Naive thymus-derived CD4-positive, alpha-beta T cell (primary cell): ENCODE measurements at regions of chr4 and their contacts with region 1.

Region 1: GRCh38 chr4:114386637-114387233 is 211.9 kb upstream of the UGT8 start:
- DNase-seq: peak in 2 of 9 donors; percentile 10 to 11
- ATAC-seq: no peak
- H3K4me3 ChIP-seq: no peak overlapping the region
- H3K4me3 Mint-ChIP-seq: no peak overlapping the region
- H3K27ac ChIP-seq: no peak overlapping the region
- H3K27ac Mint-ChIP-seq: no peak overlapping the region
- H3K4me1 ChIP-seq: no peaks in the 10 kb centered on the region
- H3K4me1 Mint-ChIP-seq: peaks cover 0 to 2% (median 0%) of the 10 kb centered on the region in 7 donors
- H3K27me3 ChIP-seq: no peaks in the 10 kb centered on the region
- H3K27me3 Mint-ChIP-seq: peaks cover 0 to 17% (median 14%) of the 10 kb centered on the region in 5 donors

Region 2: DNA sequence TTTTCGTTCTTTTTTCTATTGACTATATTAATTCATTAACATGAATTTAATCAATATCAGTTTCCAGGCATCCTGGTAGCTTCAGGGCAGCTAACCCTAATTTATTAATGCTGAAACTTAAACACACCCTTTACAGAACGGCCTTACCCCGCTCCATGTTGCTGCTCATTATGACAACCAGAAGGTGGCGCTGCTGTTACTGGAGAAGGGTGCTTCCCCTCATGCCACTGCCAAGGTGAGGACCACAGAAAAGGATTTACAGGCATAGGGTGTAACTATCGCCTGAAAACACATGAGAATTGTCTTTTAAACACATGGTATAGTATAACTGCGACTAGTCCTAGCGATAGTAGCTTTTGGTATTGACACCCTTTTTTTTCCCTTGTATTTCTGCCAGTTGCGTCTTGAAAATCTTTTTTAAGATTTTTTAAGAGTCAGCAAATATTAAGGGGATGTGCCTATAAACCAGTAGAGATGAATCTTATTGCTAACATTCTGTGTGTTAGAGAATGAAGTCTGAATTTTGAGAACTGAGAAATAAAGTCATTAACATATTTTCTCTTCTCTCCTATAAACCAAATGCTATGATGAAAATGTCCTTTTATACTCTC is 1108.3 kb before region 1 on chr4:
- CTCF ChIA-PET with region 1: no interaction called
- POLR2A ChIA-PET with region 1: no interaction called
- intact Hi-C with region 1: loop called in 1 of 2 experiments (anchors 5 kb)
- DNase-seq: peak in 7 of 9 donors; percentile 2 to 45 (median 16)
- ATAC-seq: peak; percentile 60
- H3K4me3 ChIP-seq: no peak overlapping the region
- H3K4me3 Mint-ChIP-seq: no peak overlapping the region
- H3K27ac ChIP-seq: no peak overlapping the region
- H3K27ac Mint-ChIP-seq: no peak overlapping the region
- H3K4me1 ChIP-seq: no peaks in the 10 kb centered on the region
- H3K4me1 Mint-ChIP-seq: no peaks in the 10 kb centered on the region
- H3K27me3 ChIP-seq: peaks cover 0 to 4% of the 10 kb centered on the region in 2 donors
- H3K27me3 Mint-ChIP-seq: peaks cover 11 to 21% (median 15%) of the 10 kb centered on the region in 5 donors

Region 3: DNA sequence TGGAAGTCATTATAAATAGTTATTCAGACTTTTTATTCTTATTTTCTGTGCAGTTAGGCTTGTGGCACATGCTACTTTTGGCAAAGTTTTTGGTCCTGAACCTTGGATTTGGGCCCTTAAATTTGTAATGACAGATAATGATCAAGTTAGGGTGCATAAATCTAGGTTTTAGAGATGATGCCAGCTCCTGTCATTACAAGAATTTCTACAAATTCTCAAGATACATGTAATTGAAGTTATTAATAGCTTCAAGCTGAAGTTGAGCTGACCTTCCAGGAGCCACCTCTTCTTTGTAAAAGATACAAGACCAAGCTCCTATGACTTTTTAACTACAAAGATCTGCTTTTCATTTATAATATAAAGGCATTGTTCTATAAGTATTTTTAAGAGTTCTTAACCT is 43.7 kb before region 1 on chr4:
- CTCF ChIA-PET with region 1: no interaction called
- POLR2A ChIA-PET with region 1: no interaction called
- intact Hi-C with region 1: no loop called
- DNase-seq: no peak
- ATAC-seq: no peak
- H3K4me3 ChIP-seq: no peak overlapping the region
- H3K4me3 Mint-ChIP-seq: no peak overlapping the region
- H3K27ac ChIP-seq: no peak overlapping the region
- H3K27ac Mint-ChIP-seq: no peak overlapping the region
- H3K4me1 ChIP-seq: no peaks in the 10 kb centered on the region
- H3K4me1 Mint-ChIP-seq: no peaks in the 10 kb centered on the region
- H3K27me3 ChIP-seq: no peaks in the 10 kb centered on the region
- H3K27me3 Mint-ChIP-seq: peaks cover 0 to 15% (median 10%) of the 10 kb centered on the region in 5 donors

Region 4: DNA sequence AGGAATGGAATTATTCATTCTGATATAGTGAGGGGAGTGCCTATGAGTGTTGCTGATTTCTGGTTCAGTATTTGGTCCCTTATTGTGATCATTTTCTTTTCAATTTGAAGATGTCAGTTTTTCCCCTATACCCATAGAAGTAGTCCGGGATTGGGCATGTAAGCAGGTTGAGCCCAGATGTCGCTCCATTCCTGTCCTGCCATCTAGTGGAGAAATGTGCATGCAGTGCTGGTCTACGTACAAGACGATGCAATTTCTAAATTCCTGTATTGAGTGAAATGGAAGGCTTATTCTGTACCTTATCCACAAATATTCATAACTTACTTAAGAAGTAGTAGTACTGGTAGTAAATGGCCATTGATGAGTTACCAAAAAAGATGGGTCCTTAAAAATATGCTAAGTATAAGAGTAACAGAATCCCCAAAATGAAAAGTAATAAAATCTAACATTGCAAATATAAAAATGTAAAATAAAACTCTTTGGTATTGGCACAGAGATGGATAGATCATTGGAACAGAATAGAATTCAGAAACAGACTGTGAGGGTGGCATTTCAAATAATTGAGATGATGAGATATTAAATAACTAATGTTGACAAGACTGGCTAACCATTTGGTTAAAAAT is 272.8 kb after region 1 on chr4:
- CTCF ChIA-PET with region 1: no interaction called
- POLR2A ChIA-PET with region 1: no interaction called
- intact Hi-C with region 1: loop called (anchors 1 kb)
- DNase-seq: peak in 6 of 9 donors; percentile 1 to 20 (median 10)
- ATAC-seq: peak; percentile 55
- H3K4me3 ChIP-seq: no peak overlapping the region
- H3K4me3 Mint-ChIP-seq: no peak overlapping the region
- H3K27ac ChIP-seq: no peak overlapping the region
- H3K27ac Mint-ChIP-seq: no peak overlapping the region
- H3K4me1 ChIP-seq: no peaks in the 10 kb centered on the region
- H3K4me1 Mint-ChIP-seq: no peaks in the 10 kb centered on the region
- H3K27me3 ChIP-seq: no peaks in the 10 kb centered on the region
- H3K27me3 Mint-ChIP-seq: peaks cover 5 to 30% (median 23%) of the 10 kb centered on the region in 5 donors

Region 5: GRCh38 chr4:114694770-114695169 is 308.0 kb after region 1 on chr4:
- CTCF ChIA-PET with region 1: no interaction called
- POLR2A ChIA-PET with region 1: no interaction called
- intact Hi-C with region 1: loop called (anchors 1 kb)
- DNase-seq: peak in 5 of 9 donors; percentile 1 to 17 (median 9)
- ATAC-seq: no peak
- H3K4me3 ChIP-seq: no peak overlapping the region
- H3K4me3 Mint-ChIP-seq: no peak overlapping the region
- H3K27ac ChIP-seq: no peak overlapping the region
- H3K27ac Mint-ChIP-seq: no peak overlapping the region
- H3K4me1 ChIP-seq: no peaks in the 10 kb centered on the region
- H3K4me1 Mint-ChIP-seq: peaks cover 0 to 6% (median 0%) of the 10 kb centered on the region in 7 donors
- H3K27me3 ChIP-seq: no peaks in the 10 kb centered on the region
- H3K27me3 Mint-ChIP-seq: peaks cover 0 to 16% (median 7%) of the 10 kb centered on the region in 5 donors

Region 6: GRCh38 chr4:114807759-114808404 is 421.1 kb after region 1 on chr4:
- CTCF ChIA-PET with region 1: no interaction called
- POLR2A ChIA-PET with region 1: no interaction called
- intact Hi-C with region 1: loop called (anchors 5 to 10 kb)
- DNase-seq: peak in 8 of 9 donors; percentile 3 to 22 (median 12)
- ATAC-seq: peak; percentile 78
- H3K4me3 ChIP-seq: no peak overlapping the region
- H3K4me3 Mint-ChIP-seq: no peak overlapping the region
- H3K27ac ChIP-seq: no peak overlapping the region
- H3K27ac Mint-ChIP-seq: no peak overlapping the region
- H3K4me1 ChIP-seq: no peaks in the 10 kb centered on the region
- H3K4me1 Mint-ChIP-seq: no peaks in the 10 kb centered on the region
- H3K27me3 ChIP-seq: no peaks in the 10 kb centered on the region
- H3K27me3 Mint-ChIP-seq: peaks cover 0 to 10% (median 5%) of the 10 kb centered on the region in 5 donors